B cell (primary cell): ENCODE measurements at regions of chr11 and their contacts with region 1.

Region 1: DNA sequence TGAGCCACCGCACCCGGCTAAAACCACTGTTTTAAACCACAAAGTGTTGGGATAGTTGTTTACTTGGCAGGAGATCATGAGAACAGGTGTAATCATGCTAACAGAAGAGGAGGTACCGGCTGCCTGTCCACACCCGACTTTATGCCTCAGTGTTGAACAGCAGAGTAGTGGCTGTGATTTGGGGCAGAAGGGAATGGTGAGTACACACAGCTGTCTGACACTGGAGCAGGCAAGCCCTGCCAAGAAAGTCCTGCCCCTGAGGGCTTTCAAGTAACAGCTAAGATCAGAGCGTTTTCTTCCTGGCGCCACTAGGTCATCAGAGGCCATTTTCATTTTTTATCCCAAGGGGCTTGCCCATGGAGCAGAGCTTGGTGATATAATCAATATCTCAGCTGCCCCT is 8.1 kb downstream of the CDKN1C start:
- DNase-seq: no peak
- ATAC-seq: no peak
- H3K4me3 ChIP-seq: no peak overlapping the region
- H3K4me3 Mint-ChIP-seq: no peak overlapping the region
- H3K27ac ChIP-seq: no peak overlapping the region
- H3K27ac Mint-ChIP-seq: no peak overlapping the region
- H3K4me1 ChIP-seq: no peaks in the 10 kb centered on the region
- H3K4me1 Mint-ChIP-seq: no peaks in the 10 kb centered on the region
- H3K27me3 ChIP-seq: peaks cover 0 to 21% (median 5%) of the 10 kb centered on the region in 4 experiments
- H3K27me3 Mint-ChIP-seq: peaks cover 41% of the 10 kb centered on the region
- CTCF ChIP-seq: no peak

Region 2: DNA sequence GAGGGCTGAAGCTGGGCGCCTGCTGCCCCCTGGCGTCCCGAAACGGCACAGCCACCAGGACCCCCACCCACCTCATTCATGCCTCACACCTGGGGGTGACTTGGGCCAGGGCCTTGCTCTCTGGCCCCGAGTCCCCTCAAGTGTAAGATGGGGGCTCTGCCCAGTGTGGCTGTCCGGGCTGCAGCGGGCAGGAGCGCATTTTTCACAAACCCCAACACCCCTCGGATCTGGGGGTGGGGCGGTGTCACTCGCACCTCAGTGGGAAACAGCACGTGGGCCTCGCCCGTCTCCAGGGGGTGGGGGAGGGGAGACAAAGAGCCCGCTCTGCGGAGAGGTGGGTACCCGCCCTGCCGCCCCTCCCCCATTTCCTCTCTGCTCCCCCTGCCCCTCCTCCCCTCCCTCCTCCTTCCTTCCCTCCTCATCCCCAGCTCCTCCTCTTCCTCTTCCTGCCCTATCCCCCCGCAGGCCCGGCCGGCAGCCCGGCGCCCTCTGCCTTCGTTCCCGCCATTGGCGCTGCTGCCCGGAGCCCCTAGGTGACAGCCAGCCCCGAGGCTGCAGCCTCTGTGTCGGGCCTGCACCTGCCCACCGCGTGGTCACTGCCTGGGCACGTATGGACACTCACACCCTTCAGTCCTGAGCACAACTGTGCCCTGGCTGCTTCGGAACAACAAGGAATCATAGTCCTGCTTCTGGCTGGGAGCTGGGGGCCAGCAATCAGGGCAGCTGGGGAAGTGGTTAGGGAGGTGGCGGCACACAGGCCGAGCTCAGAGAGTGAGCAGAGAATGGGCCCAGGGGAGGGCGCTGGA is 14.9 kb after region 1 on chr11:
- CTCF ChIA-PET with region 1: interaction called, 17 read pairs
- POLR2A ChIA-PET with region 1: no interaction called
- intact Hi-C with region 1: no loop called
- DNase-seq: peak; percentile 74
- ATAC-seq: peak; percentile 69
- H3K4me3 ChIP-seq: peak overlapping the region in 4 of 5 experiments; percentile 33 to 62 (median 50)
- H3K4me3 Mint-ChIP-seq: peak overlapping the region; percentile 75
- H3K27ac ChIP-seq: no peak overlapping the region
- H3K27ac Mint-ChIP-seq: no peak overlapping the region
- H3K4me1 ChIP-seq: peaks cover 15 to 21% of the 10 kb centered on the region in 2 donors
- H3K4me1 Mint-ChIP-seq: peaks cover 17% of the 10 kb centered on the region
- H3K27me3 ChIP-seq: peaks cover 0 to 7% (median 0%) of the 10 kb centered on the region in 4 experiments
- H3K27me3 Mint-ChIP-seq: no peaks in the 10 kb centered on the region
- CTCF ChIP-seq: peak; percentile 88